Naive thymus-derived CD4-positive, alpha-beta T cell (primary cell): ENCODE measurements at regions of chr2 and their contacts with region 1.

Region 1: GRCh38 chr2:143607231-143608062 is 478.2 kb downstream of the ARHGAP15 start:
- DNase-seq: no peak
- ATAC-seq: no peak
- H3K4me3 ChIP-seq: no peak overlapping the region
- H3K4me3 Mint-ChIP-seq: peak overlapping the region in 3 of 10 donors; percentile 5 to 15 (median 10)
- H3K27ac ChIP-seq: no peak overlapping the region
- H3K27ac Mint-ChIP-seq: peak overlapping the region in 4 of 9 donors; percentile 16 to 59 (median 38)
- H3K4me1 ChIP-seq: peaks cover 5 to 6% of the 10 kb centered on the region in 2 donors
- H3K4me1 Mint-ChIP-seq: peaks cover 16 to 89% (median 74%) of the 10 kb centered on the region in 7 donors
- H3K27me3 ChIP-seq: no peaks in the 10 kb centered on the region
- H3K27me3 Mint-ChIP-seq: no peaks in the 10 kb centered on the region

Region 2: DNA sequence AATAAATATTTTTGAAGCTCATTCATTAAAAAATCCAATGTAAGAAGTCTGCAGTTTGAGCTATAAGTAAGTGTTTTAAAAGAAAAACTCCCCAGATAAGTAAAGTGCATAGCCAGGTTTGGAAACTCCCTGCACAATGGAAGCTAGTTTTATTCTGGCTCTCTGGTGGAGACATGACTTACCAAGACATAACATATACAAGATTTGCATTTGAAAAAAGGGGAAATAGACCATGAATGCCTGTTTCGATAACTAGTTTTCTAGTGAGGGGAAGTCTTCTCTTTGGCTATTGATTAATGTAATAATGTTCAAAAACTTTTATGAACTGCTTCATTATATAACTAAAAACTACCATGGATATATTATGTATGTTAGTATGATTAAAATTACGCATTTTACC is 43.0 kb before region 1 on chr2:
- CTCF ChIA-PET with region 1: no interaction called
- POLR2A ChIA-PET with region 1: no interaction called
- intact Hi-C with region 1: no loop called
- DNase-seq: no peak
- ATAC-seq: no peak
- H3K4me3 ChIP-seq: no peak overlapping the region
- H3K4me3 Mint-ChIP-seq: no peak overlapping the region
- H3K27ac ChIP-seq: no peak overlapping the region
- H3K27ac Mint-ChIP-seq: no peak overlapping the region
- H3K4me1 ChIP-seq: no peaks in the 10 kb centered on the region
- H3K4me1 Mint-ChIP-seq: peaks cover 0 to 14% (median 6%) of the 10 kb centered on the region in 7 donors
- H3K27me3 ChIP-seq: no peaks in the 10 kb centered on the region
- H3K27me3 Mint-ChIP-seq: no peaks in the 10 kb centered on the region

Region 3: GRCh38 chr2:143623231-143623936 is 15.9 kb after region 1 on chr2:
- CTCF ChIA-PET with region 1: no interaction called
- POLR2A ChIA-PET with region 1: no interaction called
- intact Hi-C with region 1: loop called in 1 of 2 experiments (anchors 1 kb)
- DNase-seq: no peak
- ATAC-seq: no peak
- H3K4me3 ChIP-seq: no peak overlapping the region
- H3K4me3 Mint-ChIP-seq: no peak overlapping the region
- H3K27ac ChIP-seq: no peak overlapping the region
- H3K27ac Mint-ChIP-seq: peak overlapping the region in 2 of 9 donors; percentile 30 to 44
- H3K4me1 ChIP-seq: no peaks in the 10 kb centered on the region
- H3K4me1 Mint-ChIP-seq: peaks cover 0 to 27% (median 7%) of the 10 kb centered on the region in 7 donors
- H3K27me3 ChIP-seq: no peaks in the 10 kb centered on the region
- H3K27me3 Mint-ChIP-seq: no peaks in the 10 kb centered on the region

Region 4: DNA sequence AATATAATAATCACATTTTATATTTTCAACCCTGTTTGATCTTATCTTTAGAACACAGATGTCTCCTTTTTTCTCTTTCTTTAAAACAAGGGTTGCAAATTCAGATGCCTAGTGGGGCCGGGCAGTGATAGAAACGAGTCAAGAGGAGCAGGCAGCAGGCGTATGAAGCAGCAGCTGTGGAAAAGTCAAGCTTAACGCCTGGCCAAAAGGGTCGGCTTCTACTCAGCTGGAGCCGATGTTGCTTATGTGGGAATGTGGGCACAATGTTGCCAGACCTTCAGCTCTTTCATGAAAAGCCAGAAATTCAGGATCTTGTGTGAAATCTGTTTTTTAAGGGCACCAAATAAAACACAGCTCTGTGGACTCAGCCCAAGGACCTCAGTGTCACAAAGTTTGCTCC is 164.5 kb after region 1 on chr2:
- CTCF ChIA-PET with region 1: no interaction called
- POLR2A ChIA-PET with region 1: no interaction called
- intact Hi-C with region 1: no loop called
- DNase-seq: no peak
- ATAC-seq: no peak
- H3K4me3 ChIP-seq: no peak overlapping the region
- H3K4me3 Mint-ChIP-seq: no peak overlapping the region
- H3K27ac ChIP-seq: no peak overlapping the region
- H3K27ac Mint-ChIP-seq: peak overlapping the region in 1 of 9 donors; percentile 11
- H3K4me1 ChIP-seq: no peaks in the 10 kb centered on the region
- H3K4me1 Mint-ChIP-seq: peaks cover 0 to 2% (median 0%) of the 10 kb centered on the region in 7 donors
- H3K27me3 ChIP-seq: no peaks in the 10 kb centered on the region
- H3K27me3 Mint-ChIP-seq: no peaks in the 10 kb centered on the region